HEK293 (cell line): ENCODE measurements at regions of chr17 and their contacts with region 1.

Region 1: GRCh38 chr17:6473128-6473767 is 29.0 kb downstream of the PIMREG start:
- H3K4me3 ChIP-seq: no peak overlapping the region
- H3K27ac ChIP-seq: no peak overlapping the region
- H3K4me1 ChIP-seq: peaks cover 9% of the 10 kb centered on the region
- CTCF ChIP-seq: peak; percentile 76

Region 2: GRCh38 chr17:6501359-6501758 is 28.1 kb after region 1 on chr17:
- CTCF ChIA-PET with region 1: interaction called, 10 read pairs
- POLR2A ChIA-PET with region 1: no interaction called
- H3K4me3 ChIP-seq: no peak overlapping the region
- H3K27ac ChIP-seq: no peak overlapping the region
- H3K4me1 ChIP-seq: no peaks in the 10 kb centered on the region
- CTCF ChIP-seq: no peak

Region 3: GRCh38 chr17:6546069-6546718 is 72.9 kb after region 1 on chr17:
- CTCF ChIA-PET with region 1: interaction called, 10 read pairs
- POLR2A ChIA-PET with region 1: interaction called, 3 read pairs
- H3K4me3 ChIP-seq: no peak overlapping the region
- H3K27ac ChIP-seq: no peak overlapping the region
- H3K4me1 ChIP-seq: no peaks in the 10 kb centered on the region
- CTCF ChIP-seq: no peak